ENCODE measurements at regions of chr2 and their contacts with region 1.

Region 1: GRCh38 chr2:16608661-16609643 is 56.7 kb downstream of the CYRIA start:
- H3K4me3 Mint-ChIP-seq: peak overlapping the region; percentile 64
- H3K27ac Mint-ChIP-seq: peak overlapping the region; percentile 69
- H3K4me1 Mint-ChIP-seq: peaks cover 63% of the 10 kb centered on the region
- H3K27me3 Mint-ChIP-seq: no peaks in the 10 kb centered on the region

Region 2: DNA sequence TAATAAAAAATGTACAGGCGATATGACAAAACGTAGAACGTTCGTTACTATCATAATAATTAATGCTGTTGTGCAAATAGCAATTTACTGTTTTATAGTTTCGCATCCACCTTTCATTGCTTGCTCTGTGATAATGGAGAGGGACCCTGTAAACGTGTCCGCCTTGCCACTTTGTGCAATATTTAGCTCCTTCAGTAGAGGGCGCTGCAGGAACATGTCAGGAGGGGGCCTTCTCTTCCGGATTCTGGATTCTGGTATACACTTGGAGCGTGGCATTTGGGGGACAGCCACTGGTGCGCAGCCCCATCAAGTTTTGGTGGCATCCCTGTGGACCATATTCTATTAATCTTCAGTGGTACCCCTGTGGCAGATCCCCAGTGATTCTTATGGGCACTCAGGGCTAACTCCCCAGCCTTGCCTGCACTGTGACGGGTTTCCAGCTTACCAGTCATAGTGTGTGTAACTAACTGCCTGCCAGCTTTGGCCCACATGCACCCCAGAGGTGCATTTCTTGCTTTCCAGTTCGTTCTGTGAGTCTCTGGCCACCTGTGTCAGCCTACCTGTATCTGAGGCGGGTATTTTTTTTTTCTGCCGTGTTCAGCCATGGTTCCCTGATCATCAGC is 83.6 kb before region 1 on chr2:
- intact Hi-C with region 1: loop called (anchors 1 kb)
- H3K4me3 Mint-ChIP-seq: no peak overlapping the region
- H3K27ac Mint-ChIP-seq: no peak overlapping the region
- H3K4me1 Mint-ChIP-seq: no peaks in the 10 kb centered on the region
- H3K27me3 Mint-ChIP-seq: peaks cover 5% of the 10 kb centered on the region

Region 3: DNA sequence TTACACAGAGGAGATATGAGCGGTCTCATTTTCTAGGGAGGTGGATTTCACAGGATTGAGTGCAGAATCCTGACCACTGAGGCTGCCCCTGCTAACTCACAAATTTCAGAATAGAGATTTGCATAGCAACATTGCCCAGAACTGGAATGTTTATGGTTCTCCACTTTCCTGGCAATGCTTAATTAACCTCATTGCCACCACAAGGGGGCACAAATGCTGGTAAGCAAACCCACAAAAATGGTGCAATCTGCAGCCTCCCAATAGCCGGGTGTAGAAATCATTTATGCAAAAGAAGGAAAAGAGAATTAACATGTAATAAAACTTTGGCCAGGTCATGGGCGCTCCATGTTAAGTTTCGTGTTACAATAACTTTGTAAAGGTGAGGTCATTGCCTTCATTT is 55.7 kb before region 1 on chr2:
- intact Hi-C with region 1: loop called (anchors 1 kb)
- H3K4me3 Mint-ChIP-seq: no peak overlapping the region
- H3K27ac Mint-ChIP-seq: no peak overlapping the region
- H3K4me1 Mint-ChIP-seq: no peaks in the 10 kb centered on the region
- H3K27me3 Mint-ChIP-seq: no peaks in the 10 kb centered on the region

Region 4: GRCh38 chr2:16727256-16727655 is 118.3 kb after region 1 on chr2:
- intact Hi-C with region 1: loop called (anchors 10 kb)
- H3K4me3 Mint-ChIP-seq: no peak overlapping the region
- H3K27ac Mint-ChIP-seq: no peak overlapping the region
- H3K4me1 Mint-ChIP-seq: peaks cover 10% of the 10 kb centered on the region
- H3K27me3 Mint-ChIP-seq: peaks cover 3% of the 10 kb centered on the region

Measured in dendritic cell treated with granulocyte-macrophage colony-stimulating factor and Interleukin-4, amounts not matched to agents 40 ng/mL and 50 ng/mL, for 4 days (primary cell).